ENCODE measurements at regions of chr17 and their contacts with region 1.

Region 1: DNA sequence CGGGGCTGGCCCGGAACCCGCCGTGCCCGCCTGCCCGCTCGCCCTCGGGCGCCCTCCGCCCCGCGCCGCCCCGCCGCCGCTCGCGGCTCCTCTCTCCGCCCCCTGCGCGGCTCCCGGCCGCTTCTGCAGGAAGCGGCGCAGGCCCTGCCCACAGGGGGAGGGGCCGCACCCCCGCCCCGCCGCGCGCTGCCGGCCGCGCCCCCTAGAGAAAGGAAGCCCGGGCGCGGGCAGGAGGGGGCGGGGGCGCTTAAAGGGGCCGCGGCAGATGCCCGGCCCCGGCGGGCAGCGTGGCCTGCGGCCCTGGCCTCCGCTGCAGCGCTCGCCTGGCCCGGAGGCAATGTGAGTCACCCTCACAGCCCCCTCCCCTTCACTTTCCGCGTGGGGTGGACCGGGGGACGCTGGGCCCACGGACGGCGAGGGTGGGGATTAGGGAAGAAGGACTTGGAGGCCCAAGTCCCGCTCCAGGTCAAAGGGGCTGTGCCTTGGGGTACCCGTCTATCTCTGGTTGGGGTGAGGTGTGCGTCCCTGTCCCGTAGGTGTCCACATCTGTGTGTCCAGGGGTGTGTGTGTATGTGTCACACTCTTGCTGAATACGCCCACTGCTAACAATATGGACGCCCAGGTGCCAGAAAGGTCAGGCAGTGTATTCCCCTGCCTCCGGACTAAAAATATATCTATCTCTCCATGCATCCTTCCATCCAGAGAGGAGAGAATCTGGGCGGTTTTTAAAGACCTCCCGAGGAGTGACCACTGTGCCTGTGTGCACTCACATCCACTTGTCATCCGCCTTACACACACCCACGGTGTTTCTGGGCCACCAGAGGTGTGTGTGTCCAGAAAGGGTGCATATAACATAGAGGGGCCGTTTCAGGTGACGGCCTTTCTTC is at the start of gene GIT1:
- DNase-seq: peak; percentile 90
- ATAC-seq: peak; percentile 82
- H3K4me3 ChIP-seq: peak within 1 kb of the TSS; percentile 58 to 96 (median 69)
- H3K4me3 Mint-ChIP-seq: peak within 1 kb of the TSS; percentile 91
- H3K27ac ChIP-seq: peak within 1 kb of the TSS; percentile 46 to 51
- H3K27ac Mint-ChIP-seq: peak within 1 kb of the TSS; percentile 94
- H3K4me1 ChIP-seq: peaks cover 62 to 75% of the 10 kb centered on the region in 2 donors
- H3K4me1 Mint-ChIP-seq: peaks cover 69% of the 10 kb centered on the region
- H3K27me3 ChIP-seq: peaks cover 0 to 7% (median 2%) of the 10 kb centered on the region in 4 experiments
- H3K27me3 Mint-ChIP-seq: no peaks in the 10 kb centered on the region
- CTCF ChIP-seq: no peak
- total RNA-seq, gene GIT1: 61.9 and 66.3 TPM in 2 replicates

Region 2: DNA sequence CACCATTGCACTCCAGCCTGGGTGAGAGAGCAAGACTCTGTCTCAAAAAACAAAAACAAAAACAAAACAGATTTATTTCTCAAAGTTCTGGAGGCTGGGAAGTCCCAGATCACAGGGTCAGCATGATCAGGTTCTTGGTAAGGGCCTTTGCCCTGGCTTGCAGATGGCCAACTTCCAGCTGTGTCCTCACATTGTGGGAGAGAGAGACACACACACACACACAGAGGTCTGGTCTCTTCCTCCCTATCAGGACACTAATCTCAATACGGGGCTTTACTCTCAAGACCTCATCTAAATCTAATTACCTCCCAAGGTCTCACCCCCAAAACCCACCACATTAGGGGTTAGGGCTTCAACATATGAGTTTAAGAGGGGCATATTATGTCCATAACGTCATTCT is 226.1 kb before region 1 on chr17:
- CTCF ChIA-PET with region 1: no interaction called
- POLR2A ChIA-PET with region 1: no interaction called
- intact Hi-C with region 1: no loop called
- DNase-seq: no peak
- ATAC-seq: no peak
- H3K4me3 ChIP-seq: no peak overlapping the region
- H3K4me3 Mint-ChIP-seq: no peak overlapping the region
- H3K27ac ChIP-seq: no peak overlapping the region
- H3K27ac Mint-ChIP-seq: no peak overlapping the region
- H3K4me1 ChIP-seq: no peaks in the 10 kb centered on the region
- H3K4me1 Mint-ChIP-seq: no peaks in the 10 kb centered on the region
- H3K27me3 ChIP-seq: no peaks in the 10 kb centered on the region
- H3K27me3 Mint-ChIP-seq: no peaks in the 10 kb centered on the region
- CTCF ChIP-seq: no peak

Region 3: GRCh38 chr17:29475891-29476290 is 113.9 kb before region 1 on chr17:
- CTCF ChIA-PET with region 1: no interaction called
- POLR2A ChIA-PET with region 1: no interaction called
- intact Hi-C with region 1: no loop called
- DNase-seq: no peak
- ATAC-seq: no peak
- H3K4me3 ChIP-seq: no peak overlapping the region
- H3K4me3 Mint-ChIP-seq: no peak overlapping the region
- H3K27ac ChIP-seq: no peak overlapping the region
- H3K27ac Mint-ChIP-seq: no peak overlapping the region
- H3K4me1 ChIP-seq: no peaks in the 10 kb centered on the region
- H3K4me1 Mint-ChIP-seq: no peaks in the 10 kb centered on the region
- H3K27me3 ChIP-seq: no peaks in the 10 kb centered on the region
- H3K27me3 Mint-ChIP-seq: no peaks in the 10 kb centered on the region
- CTCF ChIP-seq: no peak

Region 4: DNA sequence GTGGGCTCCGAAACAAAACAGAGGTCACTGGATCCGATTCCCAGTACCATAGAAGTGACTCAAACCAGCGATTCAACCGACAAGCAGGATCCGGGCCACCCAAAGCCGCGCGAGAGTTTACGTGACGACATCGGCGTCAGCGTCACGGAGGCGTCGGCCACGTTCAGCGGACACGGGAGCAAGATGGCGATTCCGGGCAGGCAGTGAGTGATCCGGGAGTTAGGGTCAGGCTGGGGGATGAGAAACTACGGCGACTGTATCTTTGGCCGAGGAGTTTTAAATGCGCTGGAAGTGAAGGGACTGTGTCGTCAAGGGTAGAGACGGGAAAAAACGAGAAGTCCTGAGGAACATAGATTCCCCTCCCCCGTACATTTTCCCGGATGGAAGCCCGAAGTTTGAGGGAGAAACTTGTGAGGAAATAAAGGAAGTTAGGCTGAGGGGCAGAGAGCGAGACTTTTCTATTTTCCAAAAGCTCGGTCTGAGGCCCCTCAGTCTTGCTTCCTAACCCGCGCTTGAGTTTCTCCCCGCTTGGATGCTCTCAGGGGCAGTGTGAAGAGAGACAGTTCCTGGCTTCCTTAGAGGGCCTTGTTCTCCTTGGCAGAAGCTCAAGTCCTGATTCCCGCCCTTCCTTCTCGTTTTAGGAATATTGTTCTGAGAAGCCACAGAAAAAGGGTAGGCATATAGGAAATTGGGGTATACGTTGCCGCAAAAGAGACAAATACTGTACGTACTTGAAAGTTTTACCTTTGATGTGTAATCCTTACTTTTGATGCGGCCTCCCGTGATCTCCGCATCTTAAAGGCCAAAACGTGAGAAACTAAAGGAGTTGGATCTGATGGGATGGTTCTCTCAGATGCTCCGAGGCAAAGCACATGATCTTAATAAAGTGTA is 527.1 kb after region 1 on chr17 and contains the start of gene NSRP1:
- CTCF ChIA-PET with region 1: no interaction called
- POLR2A ChIA-PET with region 1: no interaction called
- intact Hi-C with region 1: loop called (anchors 2 kb)
- DNase-seq: peak; percentile 94
- ATAC-seq: peak; percentile 97
- H3K4me3 ChIP-seq: peak within 1 kb of the TSS; percentile 95 to 100 (median 99)
- H3K4me3 Mint-ChIP-seq: peak within 1 kb of the TSS; percentile 98
- H3K27ac ChIP-seq: peak within 1 kb of the TSS; percentile 99
- H3K27ac Mint-ChIP-seq: peak within 1 kb of the TSS; percentile 98
- H3K4me1 ChIP-seq: peaks cover 12 to 13% of the 10 kb centered on the region in 2 donors
- H3K4me1 Mint-ChIP-seq: peaks cover 40% of the 10 kb centered on the region
- H3K27me3 ChIP-seq: no peaks in the 10 kb centered on the region
- H3K27me3 Mint-ChIP-seq: no peaks in the 10 kb centered on the region
- CTCF ChIP-seq: no peak
- total RNA-seq, gene NSRP1: 41.0 and 46.2 TPM in 2 replicates

Measured in B cell (primary cell).